Common myeloid progenitor, CD34-positive (primary cell): ENCODE measurements at regions of chr2 and their contacts with region 1.

Region 1: DNA sequence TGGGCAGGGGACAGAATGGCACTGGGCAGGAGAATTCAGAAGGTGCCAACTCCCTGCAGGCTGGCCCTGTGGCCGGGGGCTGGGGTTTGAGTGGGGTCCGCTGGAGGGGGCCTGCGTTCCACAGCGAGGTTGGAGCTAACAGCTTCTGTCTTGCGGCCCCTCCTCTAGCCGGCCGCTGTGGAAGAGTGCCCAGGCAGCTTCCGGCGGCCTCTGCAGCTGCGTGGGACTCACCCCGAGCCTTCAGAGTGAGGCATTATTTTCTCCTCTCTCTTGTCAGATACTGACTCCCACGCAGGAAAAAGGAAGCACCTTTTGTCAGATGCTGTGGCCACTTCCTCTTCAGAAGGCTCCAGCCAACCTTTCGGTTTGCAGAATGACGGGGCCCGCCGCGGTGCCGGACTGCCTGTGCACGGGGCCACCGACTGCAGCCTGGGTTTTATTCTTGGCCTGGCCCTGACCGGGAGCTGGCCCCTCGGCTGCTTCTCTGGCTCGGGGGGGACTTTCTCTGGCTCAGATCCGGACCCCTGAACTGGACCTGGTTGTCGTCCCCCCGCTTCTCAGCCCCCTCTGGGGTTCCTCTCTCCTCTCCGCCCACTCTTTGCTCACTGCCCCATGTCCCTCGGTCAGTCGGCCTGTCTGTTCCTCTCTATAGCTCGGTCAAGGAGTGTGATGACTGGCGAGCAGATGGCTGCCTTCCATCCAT is 40.1 kb downstream of the ARHGAP25 start:
- DNase-seq: peak; percentile 87 to 97 (median 95)
- H3K4me3 ChIP-seq: peak overlapping the region in 6 of 7 experiments; percentile 36 to 70 (median 58)
- H3K27ac ChIP-seq: peak overlapping the region; percentile 58 to 82
- H3K4me1 ChIP-seq: peaks cover 38 to 87% (median 78%) of the 10 kb centered on the region in 4 experiments
- H3K27me3 ChIP-seq: no peaks in the 10 kb centered on the region

Region 2: DNA sequence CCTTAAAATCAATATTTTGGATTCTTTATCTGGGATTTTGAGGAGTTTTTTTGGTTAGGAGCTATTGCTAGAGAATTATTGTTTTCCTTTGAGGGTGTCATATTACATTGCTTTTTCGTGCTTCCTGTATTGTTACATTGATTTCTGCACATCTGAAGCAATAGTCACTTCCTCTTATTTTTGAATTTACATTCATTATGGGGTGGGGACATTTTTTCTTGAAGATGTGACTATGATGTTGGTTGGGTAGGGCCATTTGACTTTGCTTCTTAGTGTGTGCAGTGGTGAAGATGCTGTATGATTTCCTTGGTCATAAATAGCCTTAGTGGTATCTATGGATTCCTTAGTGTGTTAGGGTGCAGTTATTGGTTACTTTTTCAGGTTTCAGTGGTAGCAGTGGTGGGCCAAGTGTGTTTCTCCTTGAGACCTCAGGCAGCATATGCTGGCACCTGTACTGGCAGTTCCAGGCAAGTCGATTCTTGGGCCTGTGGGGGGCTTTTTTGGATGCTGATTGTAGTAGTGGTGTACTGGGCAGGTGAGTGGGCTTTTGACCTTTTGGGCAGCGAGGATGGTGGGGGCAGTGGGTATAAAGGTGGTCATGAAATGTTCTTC is 21.7 kb after region 1 on chr2:
- CTCF ChIA-PET with region 1: interaction called, 13 read pairs
- POLR2A ChIA-PET with region 1: no interaction called
- DNase-seq: peak; percentile 19 to 65 (median 47)
- H3K4me3 ChIP-seq: no peak overlapping the region
- H3K27ac ChIP-seq: peak overlapping the region in 1 of 2 experiments; percentile 9
- H3K4me1 ChIP-seq: peaks cover 0 to 25% (median 12%) of the 10 kb centered on the region in 4 experiments
- H3K27me3 ChIP-seq: no peaks in the 10 kb centered on the region

Region 3: DNA sequence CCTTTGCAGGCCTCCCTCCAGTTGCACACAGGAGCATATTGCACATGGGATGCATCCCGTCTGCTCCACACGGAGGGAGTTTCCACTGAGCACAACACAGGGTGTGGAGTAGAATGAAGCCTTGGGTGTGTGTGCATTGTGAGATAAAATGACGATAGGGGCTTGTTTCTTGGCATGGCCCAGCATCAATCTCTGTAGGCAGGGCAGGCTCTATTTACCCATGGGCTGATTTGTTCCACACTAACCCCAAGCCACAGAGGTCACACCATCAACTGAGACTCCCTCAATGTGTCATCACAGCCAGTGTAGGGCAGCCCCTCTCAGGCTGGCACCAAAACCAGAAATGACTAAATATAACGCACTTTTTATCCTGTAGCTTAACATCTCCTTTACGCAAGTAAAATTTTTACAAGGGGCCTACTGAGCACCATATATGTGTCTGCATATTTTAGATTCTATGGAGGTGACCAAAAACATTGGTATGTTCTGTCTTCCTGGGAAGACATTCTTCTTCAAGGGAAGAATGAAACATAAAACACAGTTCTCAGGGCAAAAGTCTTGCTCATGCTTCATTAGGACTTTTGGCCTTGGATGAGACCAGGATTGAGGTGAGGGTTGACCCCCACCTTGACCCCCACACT is 197.0 kb after region 1 on chr2:
- CTCF ChIA-PET with region 1: no interaction called
- POLR2A ChIA-PET with region 1: no interaction called
- DNase-seq: no peak
- H3K4me3 ChIP-seq: no peak overlapping the region
- H3K27ac ChIP-seq: no peak overlapping the region
- H3K4me1 ChIP-seq: peaks cover 0 to 3% (median 0%) of the 10 kb centered on the region in 4 experiments
- H3K27me3 ChIP-seq: peaks cover 0 to 1% (median 0%) of the 10 kb centered on the region in 5 experiments